ENCODE measurements at regions of chr16 and their contacts with region 1.

Region 1: DNA sequence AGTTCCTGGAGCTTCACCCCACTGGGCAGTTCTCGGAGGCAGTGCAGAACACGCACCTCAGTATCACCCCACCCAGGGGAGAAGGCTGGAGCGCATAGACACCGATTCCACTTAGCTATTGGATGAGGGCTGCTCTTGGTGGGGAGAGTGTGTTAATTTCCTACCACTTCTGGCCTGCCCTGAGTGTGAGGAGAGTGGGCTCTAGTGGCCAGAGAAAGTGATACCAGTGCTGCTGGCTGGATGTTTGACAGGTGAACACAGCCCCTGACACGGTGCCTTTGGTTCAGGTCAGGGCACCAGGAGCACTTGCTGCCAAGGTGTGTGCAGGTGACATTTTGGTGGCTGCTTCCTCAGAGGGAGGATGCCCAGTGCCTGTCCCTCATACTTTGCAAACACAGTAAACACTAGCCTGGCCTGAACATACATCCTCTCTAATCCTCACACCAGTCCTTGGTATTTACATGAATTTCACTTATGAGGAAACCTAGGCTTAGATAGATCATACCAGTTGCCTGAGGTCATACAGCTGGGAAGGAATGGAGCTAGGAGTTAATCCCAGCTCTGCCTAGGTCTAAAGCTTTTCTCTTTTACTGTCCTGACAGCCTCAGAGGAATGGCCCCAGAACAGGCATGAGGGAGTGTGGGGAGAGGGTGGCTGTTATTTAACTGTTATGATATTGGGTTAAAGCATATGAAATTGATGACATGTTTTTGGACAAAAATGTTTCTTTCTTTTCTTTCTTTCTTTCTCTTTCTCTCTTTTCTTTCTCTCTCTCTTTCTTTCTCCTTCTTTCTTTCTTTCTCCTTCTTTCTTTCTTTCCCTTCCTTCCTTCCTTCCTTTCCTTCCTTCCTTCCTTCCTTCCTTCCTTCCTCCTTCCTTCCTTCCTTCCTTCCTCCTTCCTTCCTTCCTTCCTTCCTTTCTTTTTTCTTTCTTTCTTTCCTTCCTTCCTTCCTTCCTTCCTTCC is 21.0 kb upstream of the ITGAX start:
- DNase-seq: no peak
- ATAC-seq: peak; percentile 50 to 66 (median 55)
- H3K4me3 ChIP-seq: no peak overlapping the region
- H3K27ac ChIP-seq: no peak overlapping the region
- H3K4me1 ChIP-seq: peaks cover 0 to 9% (median 0%) of the 10 kb centered on the region in 12 donors
- H3K27me3 ChIP-seq: peaks cover 19 to 66% (median 32%) of the 10 kb centered on the region in 9 donors
- CTCF ChIP-seq: peak in 10 of 12 donors; percentile 10 to 43 (median 22)
- POLR2A ChIP-seq: no peak

Region 2: DNA sequence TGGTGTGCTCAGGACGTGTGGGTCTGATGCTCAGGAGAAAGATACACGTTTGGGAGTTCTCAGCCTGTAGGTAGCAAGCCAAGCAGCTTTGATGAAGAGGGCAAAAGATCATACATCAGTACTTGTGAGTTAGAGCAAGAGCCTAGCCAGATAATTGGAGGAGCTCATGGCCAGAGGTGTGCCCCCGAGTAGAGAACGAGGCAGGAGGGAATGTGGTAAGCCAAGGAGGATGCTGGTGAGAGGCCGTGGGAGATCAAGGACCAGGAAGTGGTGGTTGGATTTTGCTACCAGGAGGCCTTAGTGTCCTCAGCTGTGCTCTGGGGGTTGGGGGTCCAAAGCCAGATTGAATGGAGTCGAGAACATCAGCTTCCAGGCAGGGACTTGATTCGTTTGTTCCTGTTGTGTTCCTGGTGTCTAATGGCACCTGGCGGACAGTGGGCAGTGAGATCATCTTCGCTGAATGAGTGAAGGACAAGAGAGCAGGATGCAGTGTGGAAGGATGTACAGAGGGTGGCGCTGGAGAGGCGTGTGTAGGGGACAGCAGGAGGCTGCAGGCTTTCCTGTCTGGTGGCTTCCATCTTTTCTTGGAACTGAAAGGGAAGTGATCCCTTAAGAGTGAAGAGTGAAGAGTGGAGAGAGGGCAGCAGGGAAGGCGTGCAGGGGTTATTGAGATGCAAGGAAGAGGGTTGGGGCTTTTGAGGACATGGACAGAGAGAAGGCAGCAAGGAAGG is 399.0 kb before region 1 on chr16:
- intact Hi-C with region 1: no loop called
- DNase-seq: no peak
- ATAC-seq: peak in 3 of 4 donors; percentile 8 to 17 (median 13)
- H3K4me3 ChIP-seq: no peak overlapping the region
- H3K27ac ChIP-seq: no peak overlapping the region
- H3K4me1 ChIP-seq: peaks cover 0 to 17% (median 7%) of the 10 kb centered on the region in 12 donors
- H3K27me3 ChIP-seq: no peaks in the 10 kb centered on the region
- CTCF ChIP-seq: peak in 11 of 12 donors; percentile 13 to 57 (median 45)
- POLR2A ChIP-seq: no peak

Region 3: GRCh38 chr16:31253642-31254045 is 80.3 kb before region 1 on chr16:
- intact Hi-C with region 1: loop called in 1 of 10 experiments (anchors 10 kb)
- DNase-seq: peak in 4 of 5 donors; percentile 12 to 40 (median 32)
- ATAC-seq: peak in 3 of 4 donors; percentile 48 to 85 (median 80)
- H3K4me3 ChIP-seq: no peak overlapping the region
- H3K27ac ChIP-seq: peak overlapping the region in 2 of 12 donors; percentile 3 to 86
- H3K4me1 ChIP-seq: peaks cover 0 to 27% (median 0%) of the 10 kb centered on the region in 12 donors
- H3K27me3 ChIP-seq: peaks cover 0 to 19% (median 0%) of the 10 kb centered on the region in 9 donors
- CTCF ChIP-seq: no peak
- POLR2A ChIP-seq: no peak

Measured in heart left ventricle (tissue), 16 donors.